ENCODE measurements at regions of chr20 and their contacts with region 1.

Region 1: GRCh38 chr20:1466211-1467081 is at the start of gene NSFL1C:
- DNase-seq: peak; percentile 85
- ATAC-seq: peak; percentile 93
- H3K4me3 ChIP-seq: peak within 1 kb of the TSS; percentile 75 to 86
- H3K27ac ChIP-seq: peak within 1 kb of the TSS; percentile 71
- H3K4me1 ChIP-seq: peaks cover 12 to 36% of the 10 kb centered on the region in 2 experiments
- H3K27me3 ChIP-seq: no peaks in the 10 kb centered on the region
- CTCF ChIP-seq: peak; percentile 71 to 85 (median 84)
- POLR2A ChIP-seq: peak; percentile 43
- RAD21 ChIP-seq: peak; percentile 48; the same call in 1 of the 2 replicates
- total RNA-seq, gene NSFL1C: 93.4 TPM

Region 2: DNA sequence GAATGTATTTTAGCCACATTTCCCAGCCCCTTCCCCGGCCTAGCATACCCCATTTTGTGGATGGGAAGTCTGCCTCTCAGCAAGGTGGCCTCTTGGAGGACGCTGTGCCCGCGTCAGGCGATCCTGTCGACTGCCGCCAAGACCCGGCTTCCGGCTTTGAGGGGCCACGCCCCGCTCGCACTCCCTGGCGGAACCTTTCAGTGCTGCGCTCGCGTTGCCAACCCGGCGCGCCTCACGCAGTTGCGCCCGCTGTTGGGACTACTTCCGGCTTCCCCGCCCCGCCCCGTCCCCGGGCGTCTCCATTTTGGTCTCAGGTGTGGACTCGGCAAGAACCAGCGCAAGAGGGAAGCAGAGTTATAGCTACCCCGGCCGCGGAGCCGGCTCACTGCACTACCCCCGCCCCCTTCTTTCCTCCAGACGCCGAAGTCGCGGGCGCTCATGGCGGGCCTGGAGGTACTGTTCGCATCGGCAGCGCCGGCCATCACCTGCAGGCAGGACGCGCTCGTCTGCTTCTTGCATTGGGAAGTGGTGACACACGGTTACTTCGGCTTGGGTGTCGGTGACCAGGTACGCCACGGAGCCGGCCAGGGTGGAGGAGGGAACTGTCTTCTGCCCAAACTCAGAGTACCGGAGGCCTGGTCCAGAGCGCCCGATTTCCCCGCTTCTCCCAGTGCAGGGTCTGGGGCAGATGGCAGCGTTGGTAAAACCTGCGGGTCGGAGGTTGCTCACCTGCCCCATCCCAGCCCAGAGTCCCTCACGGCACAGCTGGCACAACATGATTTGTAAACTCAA is 347.9 kb before region 1 on chr20 and contains the start of gene PSMF1:
- CTCF ChIA-PET with region 1: no interaction called
- POLR2A ChIA-PET with region 1: no interaction called
- RAD21 ChIA-PET with region 1: no interaction called
- intact Hi-C with region 1: loop called (anchors 2 kb)
- DNase-seq: peak; percentile 87
- ATAC-seq: peak; percentile 93
- H3K4me3 ChIP-seq: peak within 1 kb of the TSS; percentile 97 to 98
- H3K27ac ChIP-seq: peak within 1 kb of the TSS; percentile 69
- H3K4me1 ChIP-seq: peaks cover 14 to 19% of the 10 kb centered on the region in 2 experiments
- H3K27me3 ChIP-seq: no peaks in the 10 kb centered on the region
- CTCF ChIP-seq: no peak
- POLR2A ChIP-seq: peak; percentile 95
- RAD21 ChIP-seq: no peak
- total RNA-seq, gene PSMF1: 153 TPM

Region 3: GRCh38 chr20:1212607-1213396 is 253.6 kb before region 1 on chr20:
- CTCF ChIA-PET with region 1: no interaction called
- POLR2A ChIA-PET with region 1: no interaction called
- RAD21 ChIA-PET with region 1: no interaction called
- intact Hi-C with region 1: loop called (anchors 10 kb)
- DNase-seq: peak; percentile 66
- ATAC-seq: peak; percentile 99
- H3K4me3 ChIP-seq: peak overlapping the region in 1 of 2 experiments; percentile 28; a peak in 1 of 4 replicates
- H3K27ac ChIP-seq: no peak overlapping the region
- H3K4me1 ChIP-seq: peaks cover 6 to 19% of the 10 kb centered on the region in 2 experiments; a peak in 3 of 4 replicates
- H3K27me3 ChIP-seq: peaks cover 11% of the 10 kb centered on the region
- CTCF ChIP-seq: peak; percentile 71 to 79 (median 77)
- POLR2A ChIP-seq: no peak
- RAD21 ChIP-seq: peak; percentile 81

Region 4: DNA sequence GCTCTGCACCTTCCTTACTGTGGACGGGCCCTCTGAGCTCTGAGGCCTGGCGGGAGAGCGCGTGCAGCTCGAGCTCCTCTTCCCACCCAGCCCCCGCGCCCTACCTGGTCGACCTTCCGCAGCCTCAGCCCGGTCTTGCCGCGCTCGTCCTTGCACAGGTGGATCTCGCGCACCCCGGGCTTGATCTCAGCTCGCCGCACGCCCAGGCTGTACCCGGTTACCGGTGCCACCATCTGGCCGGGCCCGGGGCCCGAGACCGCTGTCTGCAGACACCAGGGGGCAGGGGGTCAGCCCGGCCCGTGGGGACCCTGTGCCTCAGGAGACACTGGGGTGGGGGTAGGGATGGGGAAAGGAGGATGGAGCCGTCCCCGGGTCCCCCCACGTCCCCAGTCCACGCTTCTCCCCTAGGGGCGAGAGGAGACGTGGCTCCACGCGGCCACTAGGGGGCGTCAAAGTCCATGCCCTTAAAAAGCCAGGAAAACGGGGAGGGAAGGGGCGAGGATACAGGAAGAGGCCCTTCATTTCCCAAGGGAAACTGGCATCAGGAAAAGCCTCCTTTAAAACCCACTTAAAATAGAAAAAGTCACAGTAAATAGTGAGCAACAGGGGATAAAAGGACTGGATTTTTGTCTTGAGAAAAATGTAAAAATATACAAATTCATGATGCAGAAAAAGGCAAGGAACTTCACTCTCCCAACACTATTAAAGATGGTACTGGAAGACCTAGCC is 153.0 kb before region 1 on chr20:
- CTCF ChIA-PET with region 1: no interaction called
- POLR2A ChIA-PET with region 1: no interaction called
- RAD21 ChIA-PET with region 1: interaction called in 1 of 2 experiments, 4 read pairs
- intact Hi-C with region 1: loop called (anchors 1 kb)
- DNase-seq: peak; percentile 49
- ATAC-seq: peak; percentile 93
- H3K4me3 ChIP-seq: no peak overlapping the region
- H3K27ac ChIP-seq: no peak overlapping the region
- H3K4me1 ChIP-seq: peaks cover 0 to 3% of the 10 kb centered on the region in 2 experiments; a peak in 1 of 4 replicates
- H3K27me3 ChIP-seq: no peaks in the 10 kb centered on the region
- CTCF ChIP-seq: peak; percentile 93 to 97 (median 96)
- POLR2A ChIP-seq: no peak
- RAD21 ChIP-seq: peak; percentile 93

Region 5: DNA sequence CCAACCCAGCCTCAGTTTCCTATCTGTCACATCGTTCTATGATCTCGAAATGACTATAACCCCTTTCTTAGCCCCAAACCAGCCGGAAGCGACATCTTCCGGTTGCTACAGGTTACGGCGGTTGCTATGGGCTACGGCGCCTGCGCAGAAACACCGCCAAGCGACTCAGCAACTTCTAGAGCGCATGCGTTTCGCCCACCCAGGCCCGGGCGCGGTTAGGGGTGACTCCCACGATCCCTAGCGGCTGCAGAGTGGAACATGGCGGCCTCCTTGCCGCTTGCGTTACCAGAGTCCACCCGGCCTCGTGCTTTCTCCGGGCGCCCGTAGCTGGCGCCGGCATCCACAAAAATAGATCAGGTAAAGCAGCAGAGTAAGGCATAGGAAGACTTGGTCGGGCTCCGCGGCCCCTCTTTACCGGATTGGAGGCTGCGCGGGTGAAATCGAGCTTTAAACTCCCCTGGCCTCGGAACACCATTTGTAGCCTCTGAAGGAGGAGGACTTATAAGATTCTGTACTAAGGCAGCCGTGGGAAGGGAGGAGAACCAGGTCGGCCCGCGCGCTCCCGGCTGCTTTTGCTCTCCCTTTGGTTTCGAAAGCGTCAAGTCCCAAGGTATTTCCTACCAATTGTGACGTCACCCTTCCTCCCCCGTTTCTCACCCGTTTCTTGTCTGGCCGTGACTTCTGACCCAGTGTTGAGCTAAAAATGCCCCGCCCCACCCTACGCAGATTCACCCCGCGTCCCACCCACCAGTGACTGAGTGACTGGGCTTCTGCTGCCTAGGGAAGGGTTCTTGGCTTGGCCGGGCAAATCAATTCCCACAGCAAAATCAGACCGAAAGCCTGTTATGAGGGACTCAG is 141.0 kb before region 1 on chr20:
- CTCF ChIA-PET with region 1: no interaction called
- POLR2A ChIA-PET with region 1: no interaction called
- RAD21 ChIA-PET with region 1: no interaction called
- intact Hi-C with region 1: loop called (anchors 5 kb)
- DNase-seq: peak; percentile 88
- ATAC-seq: peak; percentile 91
- H3K4me3 ChIP-seq: peak overlapping the region; percentile 93 to 97
- H3K27ac ChIP-seq: peak overlapping the region; percentile 71
- H3K4me1 ChIP-seq: peaks cover 32 to 52% of the 10 kb centered on the region in 2 experiments
- H3K27me3 ChIP-seq: no peaks in the 10 kb centered on the region
- CTCF ChIP-seq: no peak
- POLR2A ChIP-seq: peak; percentile 93
- RAD21 ChIP-seq: no peak

Region 6: GRCh38 chr20:1503564-1504227 is 37.2 kb after region 1 on chr20:
- CTCF ChIA-PET with region 1: interaction called, 18 read pairs
- POLR2A ChIA-PET with region 1: no interaction called
- RAD21 ChIA-PET with region 1: interaction called, 3 read pairs
- intact Hi-C with region 1: loop called (anchors 1 kb)
- DNase-seq: peak; percentile 91
- ATAC-seq: peak; percentile 97
- H3K4me3 ChIP-seq: no peak overlapping the region
- H3K27ac ChIP-seq: no peak overlapping the region
- H3K4me1 ChIP-seq: peaks cover 4 to 18% of the 10 kb centered on the region in 2 experiments
- H3K27me3 ChIP-seq: no peaks in the 10 kb centered on the region
- CTCF ChIP-seq: peak; percentile 99 to 100 (median 100)
- POLR2A ChIP-seq: no peak
- RAD21 ChIP-seq: peak; percentile 100